PC-9 (cell line): ENCODE measurements at regions of chr17 and their contacts with region 1.

Region 1: DNA sequence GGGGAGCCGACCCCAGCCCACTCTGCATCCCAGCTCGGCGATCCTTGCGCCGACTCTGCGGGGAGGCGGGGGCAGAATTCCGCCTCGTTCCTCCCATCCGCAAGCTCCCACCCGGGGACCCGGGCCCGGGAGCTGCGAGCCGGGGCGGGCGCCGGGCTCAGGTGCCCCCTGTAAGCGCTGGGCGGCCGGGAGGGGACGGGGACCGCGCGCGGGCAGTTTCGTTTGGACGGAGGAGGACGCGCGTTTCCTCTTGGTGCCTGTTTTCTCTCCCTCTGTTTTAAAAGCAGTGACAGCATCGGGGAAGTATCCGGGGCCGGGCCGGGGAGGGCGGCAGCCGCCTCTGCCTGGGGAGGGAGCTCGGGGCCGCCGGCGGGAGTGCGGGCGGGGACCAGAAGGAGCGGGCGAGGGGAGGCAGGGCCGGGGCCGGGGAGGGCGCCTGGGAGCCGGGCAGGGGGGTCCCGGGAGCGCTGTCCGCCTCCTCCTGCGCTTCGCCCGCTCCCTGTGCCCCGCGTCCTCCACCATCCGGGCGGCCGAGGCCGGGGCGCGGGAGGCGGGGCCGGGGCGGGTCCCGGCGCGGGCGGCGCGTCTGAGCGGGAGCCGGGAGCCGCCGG is 57.0 kb downstream of the RAP1GAP2 start:
- DNase-seq: peak in 1 of 2 experiments; percentile 67
- H3K4me3 ChIP-seq: peak overlapping the region; percentile 89; the same call in 1 of the 2 replicates
- H3K27ac ChIP-seq: no peak overlapping the region
- H3K4me1 ChIP-seq: peaks cover 11% of the 10 kb centered on the region; the same call in 1 of the 2 replicates
- H3K27me3 ChIP-seq: 0 out of 2 replicates have a peak, but pooled peaks cover 6% of the 10 kb centered on the region
- CTCF ChIP-seq: no peak

Region 2: DNA sequence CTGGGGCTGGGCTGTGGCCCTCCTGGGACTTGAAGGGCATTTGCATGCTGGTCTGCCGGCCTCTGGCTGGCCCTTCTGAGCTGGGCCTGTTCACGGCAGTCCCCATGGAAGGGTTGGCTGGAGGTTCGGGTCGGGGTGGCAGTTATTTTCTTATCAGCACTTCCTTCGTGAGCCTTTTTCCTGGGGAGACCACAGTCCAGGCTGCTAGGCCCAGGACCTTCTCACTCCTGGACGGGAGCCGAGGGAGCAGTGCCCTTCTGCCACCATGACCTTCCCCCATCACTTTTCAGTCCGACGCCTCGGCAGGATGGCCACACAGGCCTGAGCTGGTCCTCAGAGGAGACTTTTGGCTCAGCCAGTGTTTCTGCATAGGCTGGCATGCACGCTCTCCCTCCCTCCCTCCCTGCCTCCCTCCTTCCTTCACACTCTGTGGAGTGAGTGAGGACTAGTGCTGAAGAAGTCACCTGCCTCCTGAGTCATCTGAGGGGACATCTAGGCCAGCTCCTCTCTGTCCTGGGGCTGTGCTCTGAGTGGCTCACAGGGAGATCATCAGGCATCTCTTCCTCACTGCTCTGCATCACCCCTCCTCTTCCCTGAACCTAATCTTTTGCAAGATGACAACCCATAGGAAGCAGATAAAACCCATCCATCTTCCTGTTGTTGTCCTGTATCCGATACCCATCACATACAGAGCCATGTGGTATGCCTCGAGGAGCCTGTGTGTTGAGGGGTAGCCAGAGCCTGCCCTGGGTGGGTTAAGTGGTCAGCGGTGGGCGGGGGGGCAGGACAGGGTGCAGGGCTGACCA is 52.7 kb after region 1 on chr17:
- CTCF ChIA-PET with region 1: no interaction called
- POLR2A ChIA-PET with region 1: interaction called, 13 read pairs
- intact Hi-C with region 1: no loop called
- DNase-seq: no peak
- H3K4me3 ChIP-seq: no peak overlapping the region
- H3K27ac ChIP-seq: no peak overlapping the region
- H3K4me1 ChIP-seq: no peaks in the 10 kb centered on the region
- H3K27me3 ChIP-seq: no peaks in the 10 kb centered on the region
- CTCF ChIP-seq: no peak